Endothelial cell of umbilical vein (primary cell): ENCODE measurements at regions of chr14 and their contacts with region 1.

Region 1: GRCh38 chr14:34619471-34619870 is 10.5 kb downstream of the SNX6 start:
- DNase-seq: no peak
- H3K4me3 ChIP-seq: no peak overlapping the region
- H3K27ac ChIP-seq: no peak overlapping the region
- H3K4me1 ChIP-seq: peaks cover 16% of the 10 kb centered on the region
- H3K27me3 ChIP-seq: no peaks in the 10 kb centered on the region
- CTCF ChIP-seq: no peak
- POLR2A ChIP-seq: no peak

Region 2: DNA sequence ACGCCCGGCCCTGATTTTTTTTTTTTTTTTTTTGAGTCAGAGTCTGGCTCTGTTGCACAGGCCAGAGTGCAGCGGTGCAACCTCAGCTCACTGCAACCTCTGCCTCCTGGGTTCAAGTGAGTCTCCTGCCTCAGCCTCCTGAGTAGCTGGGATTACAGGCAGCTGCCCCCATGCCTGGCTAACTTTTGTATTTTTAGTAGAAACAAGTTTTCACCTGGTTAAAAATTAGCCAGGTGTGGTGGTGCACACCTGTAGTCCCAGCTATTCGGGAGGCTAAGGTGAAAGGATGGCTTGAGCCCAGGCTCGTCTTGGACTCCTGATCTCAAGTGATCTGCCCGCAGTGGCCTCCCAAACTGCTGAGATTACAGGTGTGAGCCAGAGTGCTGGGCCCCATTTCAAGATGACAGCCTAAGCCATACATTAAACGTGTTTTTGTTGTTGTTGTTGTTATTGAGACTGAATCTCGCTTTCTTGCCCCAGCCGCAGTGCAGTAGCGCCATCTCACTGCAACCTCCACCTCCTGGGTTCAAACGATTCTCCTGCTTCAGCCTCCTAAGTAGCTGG is 37.3 kb before region 1 on chr14:
- CTCF ChIA-PET with region 1: no interaction called
- POLR2A ChIA-PET with region 1: no interaction called
- dilution Hi-C with region 1: no loop called
- intact Hi-C with region 1: loop called (anchors 5 kb)
- DNase-seq: no peak
- H3K4me3 ChIP-seq: no peak overlapping the region
- H3K27ac ChIP-seq: no peak overlapping the region
- H3K4me1 ChIP-seq: no peaks in the 10 kb centered on the region
- H3K27me3 ChIP-seq: no peaks in the 10 kb centered on the region
- CTCF ChIP-seq: no peak
- POLR2A ChIP-seq: no peak

Region 3: GRCh38 chr14:34650421-34651216 is 31.1 kb after region 1 on chr14:
- CTCF ChIA-PET with region 1: no interaction called
- POLR2A ChIA-PET with region 1: no interaction called
- dilution Hi-C with region 1: no loop called
- intact Hi-C with region 1: loop called (anchors 1 kb)
- DNase-seq: peak; percentile 89
- H3K4me3 ChIP-seq: no peak overlapping the region
- H3K27ac ChIP-seq: peak overlapping the region; percentile 77
- H3K4me1 ChIP-seq: peaks cover 21% of the 10 kb centered on the region
- H3K27me3 ChIP-seq: no peaks in the 10 kb centered on the region
- CTCF ChIP-seq: no peak
- POLR2A ChIP-seq: peak; percentile 63

Region 4: GRCh38 chr14:35004839-35005238 is 385.4 kb after region 1 on chr14:
- CTCF ChIA-PET with region 1: no interaction called
- POLR2A ChIA-PET with region 1: no interaction called
- dilution Hi-C with region 1: no loop called
- intact Hi-C with region 1: no loop called
- DNase-seq: no peak
- H3K4me3 ChIP-seq: no peak overlapping the region
- H3K27ac ChIP-seq: no peak overlapping the region
- H3K4me1 ChIP-seq: no peaks in the 10 kb centered on the region
- H3K27me3 ChIP-seq: no peaks in the 10 kb centered on the region
- CTCF ChIP-seq: no peak
- POLR2A ChIP-seq: no peak